HEK293 (cell line): ENCODE measurements at regions of chr15 and their contacts with region 1.

Region 1: GRCh38 chr15:73633111-73633990 is at the start of gene NPTN:
- H3K4me3 ChIP-seq: peak within 1 kb of the TSS; percentile 97
- H3K27ac ChIP-seq: peak within 1 kb of the TSS; percentile 73
- H3K4me1 ChIP-seq: peaks cover 40% of the 10 kb centered on the region
- CTCF ChIP-seq: peak; percentile 98

Region 2: GRCh38 chr15:73298522-73299245 is 334.7 kb before region 1 on chr15:
- CTCF ChIA-PET with region 1: interaction called, 55 read pairs
- POLR2A ChIA-PET with region 1: no interaction called
- H3K4me3 ChIP-seq: no peak overlapping the region
- H3K27ac ChIP-seq: no peak overlapping the region
- H3K4me1 ChIP-seq: no peaks in the 10 kb centered on the region
- CTCF ChIP-seq: no peak

Region 3: GRCh38 chr15:73550190-73550589 is 83.2 kb before region 1 on chr15:
- CTCF ChIA-PET with region 1: interaction called, 17 read pairs
- POLR2A ChIA-PET with region 1: no interaction called
- H3K4me3 ChIP-seq: no peak overlapping the region
- H3K27ac ChIP-seq: no peak overlapping the region
- H3K4me1 ChIP-seq: no peaks in the 10 kb centered on the region
- CTCF ChIP-seq: no peak

Region 4: GRCh38 chr15:73582851-73583379 is 50.4 kb before region 1 on chr15:
- CTCF ChIA-PET with region 1: interaction called, 28 read pairs
- POLR2A ChIA-PET with region 1: no interaction called
- H3K4me3 ChIP-seq: no peak overlapping the region
- H3K27ac ChIP-seq: no peak overlapping the region
- H3K4me1 ChIP-seq: no peaks in the 10 kb centered on the region
- CTCF ChIP-seq: no peak

Region 5: GRCh38 chr15:73617301-73617831 is 16.0 kb before region 1 on chr15:
- CTCF ChIA-PET with region 1: interaction called, 235 read pairs
- POLR2A ChIA-PET with region 1: interaction called, 16 read pairs
- H3K4me3 ChIP-seq: no peak overlapping the region
- H3K27ac ChIP-seq: no peak overlapping the region
- H3K4me1 ChIP-seq: peaks cover 32% of the 10 kb centered on the region
- CTCF ChIP-seq: no peak

Region 6: DNA sequence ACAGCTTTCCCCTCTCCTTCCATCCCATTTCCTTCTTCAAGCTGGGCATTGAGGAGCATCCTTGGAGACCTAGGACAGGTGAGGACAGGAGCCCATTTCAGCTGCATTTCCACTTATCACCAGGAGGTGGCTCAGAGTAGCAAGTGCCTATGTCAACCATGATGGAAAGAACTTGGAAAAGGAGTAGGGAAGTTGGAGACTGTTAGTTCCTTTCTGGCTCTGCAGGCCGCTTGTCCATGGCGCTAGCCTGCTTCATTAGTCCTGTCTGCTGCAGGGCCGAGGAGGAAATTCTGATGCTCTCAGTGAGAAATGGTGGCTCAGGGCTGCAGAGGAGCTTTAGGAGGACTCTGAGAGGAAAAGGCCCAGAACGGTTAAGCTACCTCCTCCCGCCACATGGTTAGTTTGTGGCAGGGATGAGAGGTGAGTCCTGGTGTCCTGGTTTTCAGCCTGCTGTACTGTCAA is 43.8 kb after region 1 on chr15:
- CTCF ChIA-PET with region 1: interaction called, 26 read pairs
- POLR2A ChIA-PET with region 1: no interaction called
- H3K4me3 ChIP-seq: no peak overlapping the region
- H3K27ac ChIP-seq: no peak overlapping the region
- H3K4me1 ChIP-seq: no peaks in the 10 kb centered on the region
- CTCF ChIP-seq: no peak

Region 7: DNA sequence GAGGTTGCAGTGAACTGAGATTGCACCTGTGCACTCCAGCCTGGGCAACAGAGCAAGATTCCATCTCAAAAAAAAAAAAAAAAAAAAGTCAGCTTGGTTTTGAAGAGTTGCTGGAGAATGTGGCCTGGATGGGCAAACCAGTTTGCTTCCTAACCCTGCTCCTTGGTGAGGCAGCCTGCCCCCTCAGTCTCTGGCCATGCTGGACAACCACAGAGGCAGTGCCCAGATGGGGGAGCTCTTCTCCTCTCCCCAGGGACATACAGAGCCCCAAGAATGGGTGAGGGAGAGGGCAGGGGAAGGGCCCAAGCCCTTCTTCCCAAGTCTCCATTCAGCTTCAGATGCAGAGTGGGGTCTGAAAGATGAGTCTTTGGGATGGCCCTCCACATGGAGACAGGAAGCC is 78.7 kb after region 1 on chr15:
- CTCF ChIA-PET with region 1: interaction called, 10 read pairs
- POLR2A ChIA-PET with region 1: no interaction called
- H3K4me3 ChIP-seq: no peak overlapping the region
- H3K27ac ChIP-seq: no peak overlapping the region
- H3K4me1 ChIP-seq: no peaks in the 10 kb centered on the region
- CTCF ChIP-seq: 0 out of 2 replicates have a peak, but pooled peaks have one; percentile 10